GM18951 (cell line): ENCODE measurements at regions of chr11 and their contacts with region 1.

Region 1: GRCh38 chr11:111694851-111695250 is 71.3 kb downstream of the PPP2R1B start:
- POLR2A ChIP-seq: no peak

Region 2: GRCh38 chr11:111617286-111617685 is 77.6 kb before region 1 on chr11:
- in situ Hi-C with region 1: loop called (anchors 5 kb)
- POLR2A ChIP-seq: no peak

Region 3: DNA sequence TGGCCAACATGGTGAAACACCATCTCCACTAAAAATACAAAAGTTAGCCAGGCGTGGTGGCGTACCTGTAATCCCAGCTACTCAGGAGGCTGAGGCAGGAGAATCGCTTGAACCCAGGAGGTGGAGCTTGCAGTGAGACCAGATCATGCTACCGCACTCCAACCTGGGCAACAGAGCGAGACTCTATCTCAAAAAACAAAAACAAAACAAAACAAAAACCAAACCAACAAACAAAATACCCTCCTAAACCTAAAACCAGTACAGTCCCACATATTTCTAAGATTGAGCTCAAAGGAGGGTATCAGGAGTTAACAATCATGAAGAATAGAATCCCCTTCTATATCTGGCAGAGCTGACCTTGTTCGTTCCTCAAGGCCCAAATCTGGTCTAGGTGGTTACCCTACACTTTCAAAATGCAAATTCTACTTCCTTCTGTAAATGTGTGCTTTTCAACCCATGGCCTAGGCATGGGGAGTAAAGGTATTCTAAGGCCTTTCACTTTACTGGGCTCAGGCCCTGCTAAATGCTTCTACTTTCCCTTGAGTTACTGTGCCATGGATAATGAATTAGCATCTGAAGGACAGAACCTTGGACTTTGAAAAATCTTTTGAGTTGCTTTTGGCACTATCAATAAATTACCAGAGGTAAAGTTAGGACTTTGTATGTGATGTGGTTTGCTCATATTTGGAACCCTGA is 81.7 kb after region 1 on chr11:
- in situ Hi-C with region 1: no loop called
- POLR2A ChIP-seq: no peak